Colonic mucosa (tissue), 4 donors: ENCODE measurements at regions of chr3 and their contacts with region 1.

Region 1: GRCh38 chr3:81666493-81667121 is 94.8 kb downstream of the GBE1 start:
- DNase-seq: no peak
- H3K4me3 ChIP-seq: no peak overlapping the region
- H3K27ac ChIP-seq: no peak overlapping the region
- H3K4me1 ChIP-seq: no peaks in the 10 kb centered on the region
- H3K27me3 ChIP-seq: no peaks in the 10 kb centered on the region
- CTCF ChIP-seq: peak; percentile 72

Region 2: DNA sequence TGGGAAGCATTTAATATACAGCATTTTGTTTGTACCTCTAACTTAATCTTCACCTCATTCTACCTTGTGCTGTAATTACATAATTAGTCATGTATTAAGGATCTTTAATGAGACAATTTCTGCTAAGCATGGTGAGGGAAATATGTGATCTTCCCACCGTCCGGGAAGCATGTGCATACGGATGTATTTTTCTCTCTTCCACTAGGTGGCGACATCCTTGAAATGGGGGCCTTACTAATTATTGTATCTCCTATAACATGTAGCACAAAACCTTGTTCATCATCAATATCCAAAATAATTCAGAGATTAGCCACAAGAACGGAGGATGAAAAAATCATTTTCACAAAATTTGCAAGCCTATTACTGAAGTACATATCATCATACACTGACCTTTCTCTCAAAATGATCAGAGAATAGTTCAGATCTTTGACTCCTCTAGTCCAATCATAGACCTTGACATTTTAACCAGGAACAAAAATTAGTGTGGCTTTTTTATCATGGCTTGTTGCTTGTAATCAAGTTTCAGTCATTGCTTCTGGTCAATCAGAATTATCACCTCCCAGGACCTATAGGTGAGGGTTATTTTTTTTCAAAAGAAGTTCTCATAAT is 243.7 kb after region 1 on chr3:
- intact Hi-C with region 1: loop called (anchors 5 kb)
- DNase-seq: peak; percentile 18
- H3K4me3 ChIP-seq: no peak overlapping the region
- H3K27ac ChIP-seq: no peak overlapping the region
- H3K4me1 ChIP-seq: no peaks in the 10 kb centered on the region
- H3K27me3 ChIP-seq: no peaks in the 10 kb centered on the region
- CTCF ChIP-seq: peak; percentile 67

Region 3: GRCh38 chr3:82133070-82133606 is 466.5 kb after region 1 on chr3:
- intact Hi-C with region 1: loop called (anchors 10 kb)
- DNase-seq: peak; percentile 27
- H3K4me3 ChIP-seq: no peak overlapping the region
- H3K27ac ChIP-seq: no peak overlapping the region
- H3K4me1 ChIP-seq: no peaks in the 10 kb centered on the region
- H3K27me3 ChIP-seq: no peaks in the 10 kb centered on the region
- CTCF ChIP-seq: peak; percentile 80